Activated CD4-positive, alpha-beta T cell treated with anti-CD3 and anti-CD28 coated beads for 36 hours (primary cell): ENCODE measurements at regions of chr11 and their contacts with region 1.

Region 1: GRCh38 chr11:78416305-78417178 is 1.1 kb downstream of the GAB2 start:
- DNase-seq: peak; percentile 88
- ATAC-seq: peak; percentile 73
- H3K4me3 Mint-ChIP-seq: peak overlapping the region; percentile 81
- H3K27ac Mint-ChIP-seq: peak overlapping the region; percentile 59
- H3K4me1 Mint-ChIP-seq: peaks cover 32% of the 10 kb centered on the region
- H3K27me3 Mint-ChIP-seq: peaks cover 29% of the 10 kb centered on the region

Region 2: GRCh38 chr11:77637345-77638165 is 779.0 kb before region 1 on chr11 and contains the start of gene CLNS1A:
- CTCF ChIA-PET with region 1: no interaction called
- POLR2A ChIA-PET with region 1: no interaction called
- intact Hi-C with region 1: loop called in 1 of 2 experiments (anchors 5 kb)
- DNase-seq: peak; percentile 91
- ATAC-seq: peak; percentile 98
- H3K4me3 Mint-ChIP-seq: peak within 1 kb of the TSS; percentile 85
- H3K27ac Mint-ChIP-seq: peak within 1 kb of the TSS; percentile 94
- H3K4me1 Mint-ChIP-seq: peaks cover 40% of the 10 kb centered on the region
- H3K27me3 Mint-ChIP-seq: no peaks in the 10 kb centered on the region
- total RNA-seq, gene CLNS1A: 185 to 212 TPM

Region 3: DNA sequence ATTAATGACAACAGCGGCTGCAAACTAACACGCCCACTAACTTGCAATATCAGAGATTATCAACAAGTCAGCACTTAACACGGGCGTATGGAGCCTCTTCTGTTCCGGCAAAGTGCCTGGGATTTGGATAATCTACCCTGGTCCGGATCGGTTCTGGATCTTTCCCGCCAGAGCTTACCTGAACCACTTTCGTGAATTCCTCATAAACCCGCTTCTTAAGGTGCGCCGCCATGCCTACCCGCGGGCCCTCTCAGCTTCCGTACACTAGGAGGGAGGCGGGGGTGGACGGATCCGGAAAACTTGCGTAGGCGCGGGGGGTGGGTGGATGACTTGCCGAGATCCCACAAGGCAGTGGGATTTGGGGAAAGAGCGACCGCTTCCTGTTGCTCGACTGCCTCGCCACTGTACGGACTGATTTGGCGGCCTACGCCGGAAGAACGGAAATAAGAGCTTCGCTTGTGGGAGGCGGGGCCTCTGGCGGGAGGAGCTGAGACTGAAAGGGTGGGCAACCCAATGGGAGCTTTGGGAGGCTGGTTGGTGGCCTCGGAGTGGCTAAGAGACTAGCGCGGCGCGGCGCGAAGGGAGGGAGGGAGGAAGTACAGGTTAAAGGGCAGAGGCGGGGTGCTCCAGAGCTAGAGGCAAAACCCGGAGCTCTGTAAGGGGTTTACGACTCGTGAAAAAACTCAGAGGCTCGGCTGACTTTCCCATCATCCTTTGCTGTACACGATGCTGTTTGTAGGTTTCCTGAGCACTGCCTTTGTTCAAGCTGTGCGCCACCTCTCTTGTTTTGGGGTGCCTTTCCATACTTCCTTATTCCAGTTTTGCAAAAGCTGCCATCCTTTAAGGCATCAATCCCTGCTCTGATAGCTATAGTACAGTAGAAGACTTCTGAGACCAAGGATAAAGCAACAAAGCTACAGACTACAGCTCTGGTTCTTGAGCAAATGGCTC is 421.9 kb before region 1 on chr11 and contains the start of gene INTS4:
- CTCF ChIA-PET with region 1: no interaction called
- POLR2A ChIA-PET with region 1: no interaction called
- intact Hi-C with region 1: loop called in 1 of 2 experiments (anchors 1 kb)
- DNase-seq: peak; percentile 99
- ATAC-seq: peak; percentile 99
- H3K4me3 Mint-ChIP-seq: peak within 1 kb of the TSS; percentile 86
- H3K27ac Mint-ChIP-seq: peak within 1 kb of the TSS; percentile 97
- H3K4me1 Mint-ChIP-seq: peaks cover 29% of the 10 kb centered on the region
- H3K27me3 Mint-ChIP-seq: no peaks in the 10 kb centered on the region
- total RNA-seq, gene INTS4: 53.8 to 55.4 TPM

Region 4: DNA sequence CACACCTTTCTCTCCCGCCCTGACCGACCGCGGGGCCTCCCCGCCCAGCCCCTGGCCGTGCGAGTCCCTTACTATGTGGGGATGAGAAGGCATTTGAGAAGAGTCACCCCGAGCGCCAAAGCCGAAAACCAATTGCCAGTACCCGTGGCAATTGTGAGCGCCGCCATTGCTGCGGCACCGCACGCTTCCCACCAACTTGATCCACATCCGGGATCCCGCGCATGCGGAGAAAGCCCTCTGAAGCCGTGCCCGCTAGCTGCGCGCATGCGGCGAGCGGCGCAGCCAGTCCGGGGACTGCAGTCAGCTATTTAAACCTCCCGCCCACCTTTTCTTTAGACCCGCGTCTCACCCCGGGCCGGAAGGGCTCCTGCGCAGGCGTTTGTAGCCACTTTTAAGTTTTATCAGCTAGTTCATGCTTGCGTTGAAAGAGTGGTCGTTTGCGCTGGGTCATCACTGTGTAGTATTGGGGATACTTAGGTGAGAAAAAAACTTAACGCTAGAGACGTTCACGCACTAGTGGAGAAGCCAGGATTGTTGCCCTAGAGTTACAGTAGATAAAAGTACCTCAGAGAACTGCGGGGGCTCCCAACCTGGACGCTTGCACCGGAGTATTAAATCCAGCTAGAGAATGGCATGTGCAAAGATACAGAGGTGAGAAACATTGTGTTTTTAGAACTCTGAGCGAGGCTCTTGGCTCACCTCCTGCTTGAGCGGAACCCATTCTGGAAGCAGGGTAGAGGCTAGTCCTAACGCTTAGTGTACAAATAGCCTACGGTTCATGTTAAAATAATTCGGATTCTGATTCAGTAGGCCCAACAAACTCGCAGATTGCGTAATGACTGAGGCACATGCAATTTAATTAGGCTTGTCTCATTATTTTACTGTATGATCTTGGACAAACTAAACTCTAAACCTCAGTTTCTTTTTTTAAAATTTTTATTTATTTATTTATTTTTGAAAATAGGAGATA is 276.8 kb before region 1 on chr11 and contains the start of gene ALG8:
- CTCF ChIA-PET with region 1: interaction called, 3 read pairs
- POLR2A ChIA-PET with region 1: no interaction called
- intact Hi-C with region 1: loop called (anchors 2 to 5 kb)
- DNase-seq: peak; percentile 98
- ATAC-seq: peak; percentile 93
- H3K4me3 Mint-ChIP-seq: peak within 1 kb of the TSS; percentile 86
- H3K27ac Mint-ChIP-seq: peak within 1 kb of the TSS; percentile 95
- H3K4me1 Mint-ChIP-seq: peaks cover 32% of the 10 kb centered on the region
- H3K27me3 Mint-ChIP-seq: no peaks in the 10 kb centered on the region
- total RNA-seq, gene ALG8: 59.4 to 85.2 TPM

Region 5: DNA sequence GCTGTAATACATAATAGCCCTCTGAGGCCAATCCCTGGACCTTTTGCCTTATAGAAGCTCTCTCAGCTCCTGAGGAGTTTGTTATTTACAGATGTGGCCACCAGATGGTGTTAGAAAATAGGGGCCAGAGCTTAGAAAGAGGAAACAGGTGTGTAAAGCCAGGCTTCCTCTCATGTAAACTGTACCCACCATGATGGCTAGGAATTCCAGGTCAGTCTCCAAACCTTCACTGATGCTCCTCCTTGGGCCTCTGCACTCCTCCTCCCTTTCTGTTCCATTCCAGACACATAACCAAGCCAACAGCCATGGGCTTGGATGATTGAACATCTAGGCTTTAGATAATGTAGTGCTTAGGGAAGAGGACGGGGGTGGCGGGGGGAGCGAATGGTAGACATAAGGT is 188.1 kb before region 1 on chr11:
- CTCF ChIA-PET with region 1: interaction called, 3 read pairs
- POLR2A ChIA-PET with region 1: no interaction called
- intact Hi-C with region 1: loop called (anchors 5 kb)
- DNase-seq: no peak
- ATAC-seq: no peak
- H3K4me3 Mint-ChIP-seq: no peak overlapping the region
- H3K27ac Mint-ChIP-seq: no peak overlapping the region
- H3K4me1 Mint-ChIP-seq: peaks cover 26% of the 10 kb centered on the region
- H3K27me3 Mint-ChIP-seq: no peaks in the 10 kb centered on the region

Region 6: GRCh38 chr11:78338138-78338537 is 78.4 kb before region 1 on chr11:
- CTCF ChIA-PET with region 1: no interaction called
- POLR2A ChIA-PET with region 1: no interaction called
- intact Hi-C with region 1: no loop called
- DNase-seq: no peak
- ATAC-seq: no peak
- H3K4me3 Mint-ChIP-seq: no peak overlapping the region
- H3K27ac Mint-ChIP-seq: no peak overlapping the region
- H3K4me1 Mint-ChIP-seq: peaks cover 16% of the 10 kb centered on the region
- H3K27me3 Mint-ChIP-seq: no peaks in the 10 kb centered on the region

Region 7: GRCh38 chr11:78444726-78445125 is 28.2 kb after region 1 on chr11:
- CTCF ChIA-PET with region 1: no interaction called
- POLR2A ChIA-PET with region 1: no interaction called
- intact Hi-C with region 1: no loop called
- DNase-seq: no peak
- ATAC-seq: no peak
- H3K4me3 Mint-ChIP-seq: no peak overlapping the region
- H3K27ac Mint-ChIP-seq: no peak overlapping the region
- H3K4me1 Mint-ChIP-seq: no peaks in the 10 kb centered on the region
- H3K27me3 Mint-ChIP-seq: no peaks in the 10 kb centered on the region

Region 8: DNA sequence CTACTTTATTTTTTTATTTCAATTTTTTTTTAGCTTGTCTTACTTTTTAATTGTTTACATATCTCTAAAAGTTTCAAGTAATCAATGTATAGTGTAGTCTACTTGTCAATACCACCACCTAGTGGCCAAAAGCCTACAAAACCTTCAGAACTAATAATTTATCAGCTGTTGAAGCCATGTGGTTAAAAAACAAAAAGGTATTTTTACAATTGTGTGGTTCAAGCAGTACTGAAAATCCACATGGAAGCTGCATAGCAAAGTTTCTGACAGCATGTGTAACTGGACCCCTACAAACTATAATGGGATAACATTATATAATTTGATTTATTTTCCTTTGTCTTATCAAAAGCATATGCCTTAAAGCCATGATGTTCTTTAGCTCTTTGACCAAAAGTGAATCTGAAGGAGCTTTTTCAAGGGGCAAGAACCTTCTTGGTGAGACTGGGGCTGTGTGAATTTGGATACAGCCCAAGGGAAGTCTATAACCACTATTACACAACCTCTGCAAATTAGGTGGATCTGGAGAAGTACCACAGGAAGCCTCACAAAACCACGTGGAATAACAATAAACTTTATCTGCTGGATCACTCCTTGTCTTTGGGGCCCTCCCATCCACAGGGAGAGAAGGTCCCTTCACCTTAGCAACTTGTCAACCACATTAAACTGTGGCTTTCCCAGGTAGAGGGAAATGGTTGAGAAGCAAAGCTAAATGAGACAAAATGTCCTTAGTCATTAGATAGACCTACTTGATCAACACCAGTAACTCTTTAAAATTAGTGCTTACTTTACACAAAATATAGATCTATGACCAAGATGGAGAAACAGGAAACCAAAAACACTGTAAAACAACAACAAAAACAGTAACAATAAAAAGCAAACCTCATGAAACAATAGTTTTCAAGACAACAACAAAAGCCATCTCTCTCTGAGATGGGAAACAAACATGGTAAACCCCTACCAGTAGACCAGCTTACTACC is 148.2 kb after region 1 on chr11:
- CTCF ChIA-PET with region 1: interaction called, 69 read pairs
- POLR2A ChIA-PET with region 1: interaction called, 5 read pairs
- intact Hi-C with region 1: loop called (anchors 1 to 2 kb)
- DNase-seq: peak; percentile 43
- ATAC-seq: peak; percentile 61
- H3K4me3 Mint-ChIP-seq: no peak overlapping the region
- H3K27ac Mint-ChIP-seq: peak overlapping the region; percentile 59
- H3K4me1 Mint-ChIP-seq: peaks cover 31% of the 10 kb centered on the region
- H3K27me3 Mint-ChIP-seq: no peaks in the 10 kb centered on the region

Region 9: GRCh38 chr11:78645226-78646202 is 229.0 kb after region 1 on chr11:
- CTCF ChIA-PET with region 1: no interaction called
- POLR2A ChIA-PET with region 1: no interaction called
- intact Hi-C with region 1: loop called in 1 of 2 experiments (anchors 2 kb)
- DNase-seq: peak; percentile 78
- ATAC-seq: no peak
- H3K4me3 Mint-ChIP-seq: no peak overlapping the region
- H3K27ac Mint-ChIP-seq: no peak overlapping the region
- H3K4me1 Mint-ChIP-seq: peaks cover 31% of the 10 kb centered on the region
- H3K27me3 Mint-ChIP-seq: peaks cover 7% of the 10 kb centered on the region